Lower leg skin (tissue), 4 donors: ENCODE measurements at regions of chr1 and their contacts with region 1.

Region 1: GRCh38 chr1:155989242-155990004 is 11.1 kb upstream of the ARHGEF2 start:
- DNase-seq: peak; percentile 71 to 95
- H3K4me3 ChIP-seq: no peak overlapping the region
- CTCF ChIP-seq: peak in 2 of 3 donors; percentile 25 to 91
- POLR2A ChIP-seq: no peak

Region 2: GRCh38 chr1:155946633-155947219 is 42.7 kb before region 1 on chr1:
- intact Hi-C with region 1: loop called (anchors 5 kb)
- DNase-seq: no peak
- H3K4me3 ChIP-seq: no peak overlapping the region
- CTCF ChIP-seq: no peak
- POLR2A ChIP-seq: no peak